Left ventricle myocardium superior (tissue), 1 donor: ENCODE measurements at regions of chr3 and their contacts with region 1.

Region 1: GRCh38 chr3:41853540-41854196 is 108.2 kb downstream of the ULK4 start:
- DNase-seq: no peak
- ATAC-seq: no peak

Region 2: DNA sequence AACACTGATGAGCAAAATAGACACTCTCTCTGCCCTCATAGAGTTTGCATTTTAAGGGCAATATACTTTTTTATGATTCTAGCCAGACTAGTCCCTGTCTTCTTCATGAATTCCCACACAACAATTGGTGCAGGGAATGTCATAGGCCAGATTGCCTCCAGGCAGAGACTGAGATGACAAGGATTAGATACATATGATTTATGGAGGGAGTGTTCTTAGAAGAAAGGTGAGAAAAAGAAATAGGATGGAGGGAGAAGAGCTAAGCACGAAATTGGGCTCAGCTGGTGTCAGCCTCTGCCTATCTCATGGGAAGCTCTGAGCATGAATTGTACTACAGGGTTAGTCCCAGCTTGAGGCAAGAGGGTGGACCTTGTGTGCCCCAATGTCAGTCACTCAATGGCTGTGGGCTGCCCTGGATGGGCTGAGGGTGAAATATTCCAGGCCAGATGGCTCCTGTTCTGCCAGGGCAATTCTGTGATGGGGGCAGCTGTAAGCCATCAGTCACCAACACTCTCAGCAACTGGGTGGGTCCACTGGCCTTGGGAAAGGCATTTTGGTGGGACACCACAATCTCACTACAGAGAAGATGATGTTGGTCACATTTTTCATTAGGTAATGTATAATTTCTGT is 1513.0 kb before region 1 on chr3:
- intact Hi-C with region 1: loop called (anchors 10 kb)
- DNase-seq: no peak
- ATAC-seq: no peak